ENCODE measurements at regions of chr9 and their contacts with region 1.

Region 1: GRCh38 chr9:135907431-135908092 is at the start of gene CAMSAP1:
- DNase-seq: peak; percentile 55 to 95 (median 86)

Region 2: GRCh38 chr9:135850737-135851136 is 56.8 kb before region 1 on chr9:
- intact Hi-C with region 1: no loop called
- DNase-seq: peak in 12 of 42 donors; percentile 9 to 65 (median 31)

Region 3: GRCh38 chr9:135864447-135865049 is 43.0 kb before region 1 on chr9:
- intact Hi-C with region 1: loop called (anchors 2 kb)
- DNase-seq: peak in 41 of 42 donors; percentile 55 to 93 (median 81)

Region 4: GRCh38 chr9:135955934-135956801 is 48.6 kb after region 1 on chr9:
- intact Hi-C with region 1: loop called (anchors 2 kb)
- DNase-seq: no peak